Ovary (tissue), 10 donors: ENCODE measurements at regions of chr12 and their contacts with region 1.

Region 1: GRCh38 chr12:47742253-47742825 is 16.3 kb downstream of the RAPGEF3 start:
- DNase-seq: peak in 4 of 5 donors; percentile 68 to 77 (median 74)
- H3K4me3 ChIP-seq: no peak overlapping the region
- H3K27ac ChIP-seq: peak overlapping the region in 1 of 2 donors; percentile 51
- H3K4me1 ChIP-seq: peaks cover 12% of the 10 kb centered on the region
- H3K27me3 ChIP-seq: no peaks in the 10 kb centered on the region
- CTCF ChIP-seq: peak; percentile 65 to 95 (median 93)
- EP300 ChIP-seq: no peak
- POLR2A ChIP-seq: no peak

Region 2: GRCh38 chr12:47705566-47706425 is 36.5 kb before region 1 on chr12 and contains the start of gene RPAP3:
- intact Hi-C with region 1: loop called in 1 of 4 experiments (anchors 5 kb)
- DNase-seq: peak; percentile 97 to 98 (median 97)
- H3K4me3 ChIP-seq: peak within 1 kb of the TSS; percentile 99
- H3K27ac ChIP-seq: peak within 1 kb of the TSS; percentile 64 to 81
- H3K4me1 ChIP-seq: peaks cover 8% of the 10 kb centered on the region
- H3K27me3 ChIP-seq: no peaks in the 10 kb centered on the region
- CTCF ChIP-seq: peak; percentile 76 to 87 (median 84)
- EP300 ChIP-seq: no peak
- POLR2A ChIP-seq: peak; percentile 65
- total RNA-seq, gene RPAP3: 18.4 to 71.3 (median 41.8) TPM

Region 3: GRCh38 chr12:47785036-47785886 is 42.9 kb after region 1 on chr12:
- intact Hi-C with region 1: no loop called
- DNase-seq: peak; percentile 69 to 82 (median 79)
- H3K4me3 ChIP-seq: no peak overlapping the region
- H3K27ac ChIP-seq: peak overlapping the region; percentile 46 to 70
- H3K4me1 ChIP-seq: no peaks in the 10 kb centered on the region
- H3K27me3 ChIP-seq: no peaks in the 10 kb centered on the region
- CTCF ChIP-seq: no peak
- EP300 ChIP-seq: no peak
- POLR2A ChIP-seq: no peak